Activated CD4-positive, alpha-beta memory T cell treated with anti-CD3 and anti-CD28 coated beads for 36 hours (primary cell): ENCODE measurements at regions of chr6 and their contacts with region 1.

Region 1: DNA sequence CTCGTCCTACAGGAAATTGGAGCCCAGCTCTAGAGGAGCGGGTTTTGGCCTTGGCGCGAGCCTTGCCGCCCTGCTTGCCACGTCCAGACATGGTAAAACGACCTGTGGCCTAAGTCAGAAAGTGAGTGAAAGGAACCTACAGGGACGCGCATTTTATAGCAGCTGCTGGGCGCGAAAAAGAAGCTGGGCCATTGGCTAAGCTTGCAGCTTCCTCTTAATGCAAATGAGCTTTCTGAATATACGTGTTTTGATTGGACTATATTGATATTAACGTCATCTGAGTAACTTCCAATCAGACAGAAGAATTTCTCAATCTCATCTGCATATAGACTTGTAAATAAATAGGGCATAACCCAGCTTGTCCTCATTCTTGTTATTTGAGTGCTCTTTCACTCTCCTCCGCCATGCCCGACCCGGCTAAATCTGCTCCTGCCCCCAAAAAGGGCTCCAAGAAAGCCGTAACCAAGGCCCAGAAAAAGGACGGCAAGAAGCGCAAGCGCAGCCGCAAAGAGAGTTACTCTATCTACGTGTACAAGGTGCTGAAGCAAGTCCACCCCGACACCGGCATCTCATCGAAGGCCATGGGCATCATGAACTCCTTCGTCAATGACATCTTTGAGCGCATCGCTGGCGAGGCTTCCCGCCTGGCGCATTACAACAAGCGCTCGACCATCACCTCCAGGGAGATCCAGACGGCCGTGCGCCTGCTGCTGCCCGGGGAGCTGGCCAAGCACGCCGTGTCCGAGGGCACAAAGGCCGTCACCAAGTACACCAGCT is 18.9 kb downstream of the OR2B2 start:
- DNase-seq: peak; percentile 95
- H3K4me3 Mint-ChIP-seq: no peak overlapping the region
- H3K27ac Mint-ChIP-seq: no peak overlapping the region
- H3K4me1 Mint-ChIP-seq: peaks cover 32% of the 10 kb centered on the region
- H3K27me3 Mint-ChIP-seq: peaks cover 7% of the 10 kb centered on the region

Region 2: DNA sequence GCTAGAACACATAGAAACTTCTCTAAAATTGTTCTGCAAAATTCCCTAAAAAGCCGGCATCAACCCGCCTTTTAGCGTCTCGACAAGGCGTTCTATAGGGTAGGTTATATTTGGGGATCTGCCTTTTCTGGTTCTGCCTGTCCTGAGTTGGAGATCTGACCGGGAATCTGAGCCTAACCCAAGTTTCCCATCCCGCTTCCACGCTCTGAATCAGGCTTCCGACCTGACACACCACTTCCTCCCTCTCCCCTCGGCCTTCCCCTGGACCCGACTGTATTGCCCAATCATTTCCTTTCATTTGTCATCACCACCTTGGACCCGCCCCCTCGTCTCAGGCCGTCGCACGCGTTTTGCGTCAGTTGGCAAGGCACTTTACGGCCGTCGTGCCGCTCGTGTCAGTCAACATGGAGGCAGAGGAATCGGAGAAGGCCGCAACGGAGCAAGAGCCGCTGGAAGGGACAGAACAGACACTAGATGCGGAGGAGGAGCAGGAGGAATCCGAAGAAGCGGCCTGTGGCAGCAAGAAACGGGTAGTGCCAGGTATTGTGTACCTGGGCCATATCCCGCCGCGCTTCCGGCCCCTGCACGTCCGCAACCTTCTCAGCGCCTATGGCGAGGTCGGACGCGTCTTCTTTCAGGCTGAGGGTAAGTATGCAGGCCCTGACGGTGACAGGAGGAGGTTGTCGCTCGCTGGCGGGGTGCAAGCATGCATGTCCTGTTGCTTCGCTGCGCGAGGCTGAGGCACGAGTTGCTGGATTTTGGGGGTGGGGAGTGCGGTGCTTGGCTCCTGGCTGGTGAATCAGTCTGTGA is 1296.5 kb before region 1 on chr6 and contains the start of gene ABT1:
- CTCF ChIA-PET with region 1: no interaction called
- POLR2A ChIA-PET with region 1: no interaction called
- intact Hi-C with region 1: loop called (anchors 10 kb)
- DNase-seq: peak; percentile 98
- H3K4me3 Mint-ChIP-seq: no peak within 1 kb of the TSS
- H3K27ac Mint-ChIP-seq: no peak within 1 kb of the TSS
- H3K4me1 Mint-ChIP-seq: peaks cover 44% of the 10 kb centered on the region
- H3K27me3 Mint-ChIP-seq: peaks cover 26% of the 10 kb centered on the region
- total RNA-seq, gene ABT1: 22.6 to 22.7 TPM

Region 3: GRCh38 chr6:27177485-27178406 is 715.5 kb before region 1 on chr6:
- CTCF ChIA-PET with region 1: interaction called, 3 read pairs
- POLR2A ChIA-PET with region 1: interaction called, 4 read pairs
- intact Hi-C with region 1: loop called (anchors 2 kb)
- DNase-seq: peak; percentile 84
- H3K4me3 Mint-ChIP-seq: peak overlapping the region; percentile 88
- H3K27ac Mint-ChIP-seq: peak overlapping the region; percentile 88
- H3K4me1 Mint-ChIP-seq: peaks cover 10% of the 10 kb centered on the region
- H3K27me3 Mint-ChIP-seq: peaks cover 1% of the 10 kb centered on the region

Region 4: DNA sequence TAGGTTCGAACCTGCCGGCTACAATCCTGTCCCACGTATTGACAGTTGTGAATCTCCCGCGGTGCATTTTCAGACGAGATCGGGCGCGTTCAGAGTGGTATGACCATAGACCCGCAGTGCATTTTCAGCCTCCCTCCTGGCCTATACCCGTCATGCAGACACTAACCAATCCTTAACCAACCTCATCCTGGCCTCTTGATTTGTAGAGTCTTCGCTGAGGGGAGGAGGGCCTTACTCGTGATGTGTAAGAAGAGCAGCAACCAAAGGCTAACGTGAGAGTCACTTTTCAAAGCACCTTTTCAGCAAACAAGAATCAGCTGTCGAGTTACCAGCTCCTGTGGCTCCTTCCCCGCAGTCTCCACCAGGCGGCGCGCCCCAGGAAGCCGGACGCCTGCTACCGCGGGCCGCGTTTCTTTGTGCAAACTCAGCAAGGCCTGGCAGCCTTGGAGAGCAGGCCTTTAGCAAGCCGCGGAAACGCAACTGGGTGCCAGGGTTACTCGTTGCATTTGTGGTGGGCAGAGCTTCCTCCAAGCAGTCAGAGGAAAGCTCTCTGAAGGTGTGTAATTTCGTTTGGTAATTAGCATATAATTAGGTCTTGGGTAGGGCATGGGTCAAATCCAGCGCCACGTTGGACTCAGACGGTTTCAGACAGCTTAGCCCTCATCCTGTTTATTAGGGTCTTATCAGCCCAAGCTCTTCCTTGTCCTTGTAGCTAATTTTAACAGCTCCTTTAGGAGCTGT is 120.8 kb before region 1 on chr6:
- CTCF ChIA-PET with region 1: interaction called, 100 read pairs
- POLR2A ChIA-PET with region 1: no interaction called
- intact Hi-C with region 1: loop called (anchors 1 kb)
- DNase-seq: peak; percentile 93
- H3K4me3 Mint-ChIP-seq: peak overlapping the region; percentile 40
- H3K27ac Mint-ChIP-seq: peak overlapping the region; percentile 18
- H3K4me1 Mint-ChIP-seq: peaks cover 7% of the 10 kb centered on the region
- H3K27me3 Mint-ChIP-seq: peaks cover 12% of the 10 kb centered on the region

Region 5: GRCh38 chr6:27838058-27838944 is 54.9 kb before region 1 on chr6:
- CTCF ChIA-PET with region 1: interaction called, 61 read pairs
- POLR2A ChIA-PET with region 1: interaction called, 187 read pairs
- intact Hi-C with region 1: loop called (anchors 1 kb)
- DNase-seq: peak; percentile 88
- H3K4me3 Mint-ChIP-seq: no peak overlapping the region
- H3K27ac Mint-ChIP-seq: no peak overlapping the region
- H3K4me1 Mint-ChIP-seq: peaks cover 22% of the 10 kb centered on the region
- H3K27me3 Mint-ChIP-seq: peaks cover 6% of the 10 kb centered on the region

Region 6: DNA sequence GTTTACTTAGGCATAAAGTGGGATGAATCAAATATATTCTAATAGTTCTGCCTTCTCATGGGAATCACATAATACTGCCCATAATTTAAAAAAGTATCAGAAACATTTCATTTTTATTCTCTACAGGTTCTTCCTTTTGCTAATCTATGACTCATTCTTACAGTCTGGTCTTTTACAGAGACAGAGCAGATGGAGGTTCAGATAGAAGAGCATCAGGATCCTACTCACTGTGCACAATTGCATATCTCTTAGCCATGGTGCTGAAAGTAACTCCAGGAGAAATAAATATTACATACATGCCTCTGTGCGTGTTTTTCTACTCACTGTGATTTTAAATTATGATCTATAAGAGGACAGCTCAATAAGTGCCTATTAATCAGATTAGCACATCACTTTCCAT is 47.5 kb after region 1 on chr6:
- CTCF ChIA-PET with region 1: no interaction called
- POLR2A ChIA-PET with region 1: no interaction called
- intact Hi-C with region 1: no loop called
- DNase-seq: no peak
- H3K4me3 Mint-ChIP-seq: no peak overlapping the region
- H3K27ac Mint-ChIP-seq: no peak overlapping the region
- H3K4me1 Mint-ChIP-seq: no peaks in the 10 kb centered on the region
- H3K27me3 Mint-ChIP-seq: peaks cover 48% of the 10 kb centered on the region

Region 7: DNA sequence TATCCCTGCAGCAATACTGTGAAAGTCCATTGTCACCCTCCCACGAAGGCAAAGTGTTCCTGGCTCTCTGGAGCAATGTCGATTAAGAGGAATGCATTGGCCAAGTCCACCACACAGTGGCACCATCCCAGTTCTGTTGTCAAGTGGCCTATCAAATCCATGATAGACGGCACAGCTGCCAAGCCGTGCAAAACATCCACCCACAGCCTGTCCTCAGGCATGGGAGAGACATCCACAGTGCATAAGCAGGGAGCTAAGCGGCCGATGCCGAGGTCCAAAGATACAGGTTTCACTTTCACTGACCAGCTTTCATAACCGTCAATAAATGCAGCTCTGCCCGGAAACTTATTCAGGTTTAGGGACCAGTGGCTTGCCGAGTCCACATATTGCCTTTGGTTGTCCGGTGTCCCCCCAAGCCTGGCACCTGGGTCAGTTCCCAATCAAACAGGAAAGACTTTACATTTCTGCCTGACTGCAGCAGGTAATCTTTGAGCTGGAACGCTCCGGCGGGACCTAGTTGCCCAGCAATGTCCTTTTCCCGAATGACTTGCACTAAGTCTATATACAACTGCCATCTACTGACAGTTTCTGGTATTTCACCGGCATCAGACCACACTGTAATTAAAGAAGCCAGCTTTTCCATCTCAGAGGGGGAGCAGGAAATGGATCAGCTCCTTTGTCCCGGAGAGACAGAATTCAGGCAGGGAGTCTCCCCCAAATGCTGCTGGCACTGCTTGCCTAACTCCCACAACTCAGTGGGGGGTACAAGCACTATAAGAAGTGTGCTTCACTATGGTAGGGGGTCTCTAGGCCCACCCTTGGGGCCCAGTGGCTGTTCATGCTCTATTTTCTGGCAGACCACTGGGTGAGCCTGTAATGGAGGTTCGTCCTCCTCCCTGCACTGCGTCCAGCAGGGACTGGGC is 462.8 kb after region 1 on chr6:
- CTCF ChIA-PET with region 1: interaction called, 18 read pairs
- POLR2A ChIA-PET with region 1: no interaction called
- intact Hi-C with region 1: no loop called
- DNase-seq: peak; percentile 61
- H3K4me3 Mint-ChIP-seq: peak overlapping the region; percentile 85
- H3K27ac Mint-ChIP-seq: no peak overlapping the region
- H3K4me1 Mint-ChIP-seq: peaks cover 18% of the 10 kb centered on the region
- H3K27me3 Mint-ChIP-seq: no peaks in the 10 kb centered on the region